ENCODE measurements at regions of chr4 and their contacts with region 1.

Region 1: DNA sequence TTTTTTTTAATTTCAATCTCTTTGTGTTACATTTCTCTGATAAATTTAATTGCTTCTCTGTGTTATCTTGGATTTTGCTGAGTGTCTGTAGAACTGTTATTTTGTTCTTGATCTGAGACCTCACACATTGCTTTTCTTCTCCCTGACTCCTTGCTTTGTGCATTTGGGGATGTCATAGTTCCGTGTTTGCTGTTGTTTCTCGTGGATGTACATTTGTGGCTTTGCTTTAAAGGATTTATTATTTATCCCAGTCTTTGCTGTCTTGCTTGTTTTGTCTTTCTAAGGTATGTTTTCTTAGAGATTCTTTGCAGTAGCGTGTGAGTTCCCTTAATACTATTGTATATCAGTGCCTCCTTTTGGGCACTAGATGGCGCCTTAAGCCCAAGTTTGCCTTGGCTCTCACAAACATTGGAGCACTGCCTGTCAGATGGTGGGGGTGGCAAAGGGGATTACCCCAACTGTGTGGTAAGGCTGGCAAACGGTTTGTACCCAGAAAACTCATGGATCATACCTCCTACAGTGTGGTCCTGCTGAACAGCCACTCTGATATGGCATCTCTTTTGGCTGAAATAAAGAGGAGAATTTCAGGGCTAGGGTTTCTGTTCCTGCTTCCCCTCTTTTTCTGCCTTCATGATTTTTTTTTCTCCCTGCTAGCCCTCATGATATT is 96.4 kb downstream of the PGRMC2 start:
- DNase-seq: peak; percentile 63
- ATAC-seq: peak; percentile 96
- H3K4me3 ChIP-seq: no peak overlapping the region
- H3K27ac ChIP-seq: no peak overlapping the region
- H3K4me1 ChIP-seq: no peaks in the 10 kb centered on the region
- H3K27me3 ChIP-seq: no peaks in the 10 kb centered on the region
- CTCF ChIP-seq: peak; percentile 91
- EP300 ChIP-seq: no peak
- POLR2A ChIP-seq: no peak
- RAD21 ChIP-seq: peak; percentile 60

Region 2: DNA sequence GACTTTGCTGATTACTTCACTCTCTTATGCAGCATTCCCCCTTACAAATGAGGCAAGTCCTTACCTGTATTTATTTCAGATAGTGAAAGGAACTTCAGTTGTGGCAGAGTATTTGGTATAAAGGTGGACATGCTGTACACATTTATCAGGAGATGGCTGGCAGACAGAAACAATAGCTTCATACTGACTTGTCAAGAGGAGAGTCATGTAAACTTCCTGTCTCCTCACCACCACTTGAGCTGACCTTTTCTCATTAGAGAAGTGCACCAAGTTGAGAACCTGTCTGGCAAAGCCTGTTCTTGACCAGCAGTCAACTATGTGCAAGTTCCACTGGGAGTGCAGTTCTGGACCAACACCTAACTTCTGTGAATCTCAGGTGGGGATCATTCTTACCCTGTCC is 49.4 kb before region 1 on chr4:
- CTCF ChIA-PET with region 1: no interaction called
- POLR2A ChIA-PET with region 1: no interaction called
- in situ Hi-C with region 1: no loop called
- intact Hi-C with region 1: no loop called
- DNase-seq: no peak
- ATAC-seq: no peak
- H3K4me3 ChIP-seq: no peak overlapping the region
- H3K27ac ChIP-seq: no peak overlapping the region
- H3K4me1 ChIP-seq: no peaks in the 10 kb centered on the region
- H3K27me3 ChIP-seq: no peaks in the 10 kb centered on the region
- CTCF ChIP-seq: no peak
- EP300 ChIP-seq: no peak
- POLR2A ChIP-seq: no peak
- RAD21 ChIP-seq: no peak

Region 3: DNA sequence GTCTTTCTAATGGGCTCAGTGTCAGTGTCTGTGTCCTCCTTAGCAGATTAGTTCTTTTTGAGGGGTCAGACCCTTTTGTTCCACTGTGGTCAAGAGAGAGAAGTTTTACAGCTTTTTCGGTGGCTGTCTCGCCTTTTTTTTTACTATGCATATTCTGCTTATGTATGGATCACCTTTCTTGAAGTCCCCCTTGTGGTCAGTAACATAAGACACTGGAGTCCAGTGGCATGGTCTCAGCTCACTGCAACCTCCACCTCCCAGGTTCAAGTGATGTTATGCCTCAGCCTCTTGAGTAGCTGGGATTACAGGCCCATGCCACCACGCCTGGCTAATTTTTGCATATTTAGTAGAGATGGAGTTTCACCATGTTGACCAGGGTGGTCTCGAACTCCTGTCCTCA is 150.4 kb after region 1 on chr4:
- CTCF ChIA-PET with region 1: interaction called, 5 read pairs
- POLR2A ChIA-PET with region 1: no interaction called
- in situ Hi-C with region 1: no loop called
- intact Hi-C with region 1: loop called (anchors 1 kb)
- DNase-seq: peak; percentile 10
- ATAC-seq: peak; percentile 70
- H3K4me3 ChIP-seq: no peak overlapping the region
- H3K27ac ChIP-seq: no peak overlapping the region
- H3K4me1 ChIP-seq: no peaks in the 10 kb centered on the region
- H3K27me3 ChIP-seq: no peaks in the 10 kb centered on the region
- CTCF ChIP-seq: no peak
- EP300 ChIP-seq: no peak
- POLR2A ChIP-seq: no peak
- RAD21 ChIP-seq: no peak

Region 4: GRCh38 chr4:128379860-128380259 is 188.6 kb after region 1 on chr4:
- CTCF ChIA-PET with region 1: interaction called, 3 read pairs
- POLR2A ChIA-PET with region 1: no interaction called
- in situ Hi-C with region 1: no loop called
- intact Hi-C with region 1: loop called (anchors 10 kb)
- DNase-seq: peak; percentile 12
- ATAC-seq: peak; percentile 96
- H3K4me3 ChIP-seq: no peak overlapping the region
- H3K27ac ChIP-seq: no peak overlapping the region
- H3K4me1 ChIP-seq: no peaks in the 10 kb centered on the region
- H3K27me3 ChIP-seq: no peaks in the 10 kb centered on the region; a peak in 1 of 5 replicates
- CTCF ChIP-seq: peak; percentile 64
- EP300 ChIP-seq: no peak
- POLR2A ChIP-seq: no peak
- RAD21 ChIP-seq: 0 out of 2 replicates have a peak, but pooled peaks have one; percentile 14

Region 5: DNA sequence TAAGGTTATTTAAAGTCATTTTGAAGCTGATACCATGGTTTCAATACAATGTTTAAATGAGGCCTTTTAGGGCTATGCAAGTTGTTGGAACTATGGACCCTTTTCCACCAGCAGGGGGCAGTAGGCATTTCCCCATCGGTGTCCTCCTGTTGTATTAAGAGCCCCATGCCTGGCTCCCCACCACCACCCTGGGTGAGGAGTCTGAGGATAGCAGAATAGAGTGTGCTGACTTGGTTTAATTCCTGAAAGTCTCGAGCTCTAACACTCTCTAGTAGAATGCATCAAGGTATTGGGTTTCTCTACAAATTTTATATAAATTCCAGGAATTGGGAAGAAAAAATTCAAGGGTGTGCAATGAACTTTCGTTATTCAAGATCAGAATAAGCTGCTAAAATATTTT is 383.5 kb after region 1 on chr4:
- CTCF ChIA-PET with region 1: interaction called, 3 read pairs
- POLR2A ChIA-PET with region 1: no interaction called
- in situ Hi-C with region 1: loop called (anchors 25 kb)
- intact Hi-C with region 1: no loop called
- DNase-seq: peak; percentile 32
- ATAC-seq: peak; percentile 86
- H3K4me3 ChIP-seq: no peak overlapping the region
- H3K27ac ChIP-seq: no peak overlapping the region
- H3K4me1 ChIP-seq: peaks cover 21% of the 10 kb centered on the region
- H3K27me3 ChIP-seq: no peaks in the 10 kb centered on the region; a peak in 1 of 5 replicates
- CTCF ChIP-seq: peak; percentile 65
- EP300 ChIP-seq: no peak
- POLR2A ChIP-seq: no peak
- RAD21 ChIP-seq: peak; percentile 32; the same call in 1 of the 2 replicates

Measured in HepG2 (cell line).